ENCODE measurements at regions of chr11 and their contacts with region 1.

Region 1: GRCh38 chr11:62753736-62754603 is at the start of gene ZBTB3:
- DNase-seq: peak; percentile 90
- H3K4me3 ChIP-seq: peak within 1 kb of the TSS; percentile 66 to 69
- H3K27ac ChIP-seq: peak within 1 kb of the TSS; percentile 85 to 95
- H3K4me1 ChIP-seq: peaks cover 6 to 11% of the 10 kb centered on the region in 2 experiments; a peak in 3 of 4 replicates
- H3K27me3 ChIP-seq: no peaks in the 10 kb centered on the region
- CTCF ChIP-seq: no peak
- EP300 ChIP-seq: no peak
- RAD21 ChIP-seq: no peak
- polyA plus RNA-seq, gene ZBTB3: 2.1 and 3.3 TPM in 2 replicates

Region 2: GRCh38 chr11:62726915-62727763 is 26.8 kb before region 1 on chr11 and contains the start of gene HNRNPUL2:
- CTCF ChIA-PET with region 1: interaction called, 3 read pairs
- POLR2A ChIA-PET with region 1: interaction called, 33 read pairs
- DNase-seq: peak; percentile 95
- H3K4me3 ChIP-seq: peak within 1 kb of the TSS; percentile 89 to 92
- H3K27ac ChIP-seq: peak within 1 kb of the TSS; percentile 99
- H3K4me1 ChIP-seq: peaks cover 12 to 21% of the 10 kb centered on the region in 2 experiments; a peak in 3 of 4 replicates
- H3K27me3 ChIP-seq: no peaks in the 10 kb centered on the region
- CTCF ChIP-seq: no peak; the same call in 1 of the 2 replicates
- EP300 ChIP-seq: no peak
- RAD21 ChIP-seq: no peak
- polyA plus RNA-seq, gene HNRNPUL2: 31.0 and 33.5 TPM in 2 replicates

Measured in SK-N-SH (cell line).